Activated CD4-positive, alpha-beta memory T cell treated with anti-CD3 and anti-CD28 coated beads for 36 hours (primary cell): ENCODE measurements at regions of chr2 and their contacts with region 1.

Region 1: GRCh38 chr2:27890146-27890923 is at the starts of genes BABAM2 and RBKS:
- DNase-seq: peak; percentile 93
- H3K4me3 Mint-ChIP-seq: peak within 1 kb of the TSS; percentile 98
- H3K27ac Mint-ChIP-seq: peak within 1 kb of the TSS; percentile 100
- H3K4me1 Mint-ChIP-seq: peaks cover 63% of the 10 kb centered on the region
- H3K27me3 Mint-ChIP-seq: peaks cover 3% of the 10 kb centered on the region
- total RNA-seq, gene BABAM2: 72.3 to 76.6 TPM
- total RNA-seq, gene RBKS: 9.2 to 9.7 TPM

Region 2: DNA sequence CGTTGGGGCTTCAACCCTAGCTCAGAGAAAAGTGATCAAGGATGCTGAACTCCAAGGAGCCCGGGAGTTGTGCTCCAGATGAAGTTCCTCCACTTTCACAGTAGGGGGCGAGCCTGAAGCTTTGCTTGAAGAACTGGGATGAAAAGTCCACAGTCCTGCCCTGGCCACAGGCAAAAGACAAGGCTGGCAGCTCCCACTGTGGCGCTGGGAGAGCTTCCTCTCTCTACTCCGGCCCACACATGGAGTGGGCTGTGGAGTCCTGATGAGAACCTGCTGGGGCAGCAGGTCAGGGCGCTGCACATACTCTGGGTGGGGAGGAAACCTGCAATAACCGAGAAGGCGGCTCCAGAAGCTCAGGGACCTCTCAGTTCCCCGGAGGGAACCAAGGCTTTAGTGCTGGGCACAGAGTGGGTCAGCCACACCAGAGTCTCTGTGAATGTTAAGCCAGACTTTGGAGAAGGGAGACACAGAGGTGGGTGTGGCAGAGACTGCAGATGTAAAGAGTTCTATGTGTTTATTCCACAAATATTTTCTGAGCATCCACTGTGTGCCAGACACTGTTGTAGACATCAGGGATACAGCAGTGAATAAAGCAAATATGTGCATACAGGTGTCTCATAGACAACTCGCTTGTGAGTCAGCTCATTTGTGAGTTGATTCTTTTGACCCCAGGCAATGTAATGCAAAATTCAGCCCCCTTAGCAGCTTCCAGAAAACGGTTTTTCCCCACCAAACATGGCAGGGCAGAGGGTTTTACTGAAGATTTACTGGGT is 166.8 kb before region 1 on chr2:
- CTCF ChIA-PET with region 1: no interaction called
- POLR2A ChIA-PET with region 1: no interaction called
- intact Hi-C with region 1: loop called (anchors 2 kb)
- DNase-seq: peak; percentile 44
- H3K4me3 Mint-ChIP-seq: no peak overlapping the region
- H3K27ac Mint-ChIP-seq: no peak overlapping the region
- H3K4me1 Mint-ChIP-seq: peaks cover 29% of the 10 kb centered on the region
- H3K27me3 Mint-ChIP-seq: peaks cover 2% of the 10 kb centered on the region

Region 3: GRCh38 chr2:27779417-27780055 is 110.8 kb before region 1 on chr2:
- CTCF ChIA-PET with region 1: no interaction called
- POLR2A ChIA-PET with region 1: no interaction called
- intact Hi-C with region 1: no loop called
- DNase-seq: no peak
- H3K4me3 Mint-ChIP-seq: no peak overlapping the region
- H3K27ac Mint-ChIP-seq: no peak overlapping the region
- H3K4me1 Mint-ChIP-seq: peaks cover 25% of the 10 kb centered on the region
- H3K27me3 Mint-ChIP-seq: no peaks in the 10 kb centered on the region

Region 4: GRCh38 chr2:27860111-27860510 is 30.2 kb before region 1 on chr2:
- CTCF ChIA-PET with region 1: no interaction called
- POLR2A ChIA-PET with region 1: interaction called, 5 read pairs
- intact Hi-C with region 1: loop called (anchors 1 kb)
- DNase-seq: no peak
- H3K4me3 Mint-ChIP-seq: no peak overlapping the region
- H3K27ac Mint-ChIP-seq: peak overlapping the region; percentile 67
- H3K4me1 Mint-ChIP-seq: peaks cover 52% of the 10 kb centered on the region
- H3K27me3 Mint-ChIP-seq: no peaks in the 10 kb centered on the region

Region 5: GRCh38 chr2:27954771-27955383 is 64.5 kb after region 1 on chr2:
- CTCF ChIA-PET with region 1: no interaction called
- POLR2A ChIA-PET with region 1: interaction called, 3 read pairs
- intact Hi-C with region 1: loop called (anchors 2 kb)
- DNase-seq: peak; percentile 77
- H3K4me3 Mint-ChIP-seq: peak overlapping the region; percentile 42
- H3K27ac Mint-ChIP-seq: peak overlapping the region; percentile 86
- H3K4me1 Mint-ChIP-seq: peaks cover 84% of the 10 kb centered on the region
- H3K27me3 Mint-ChIP-seq: no peaks in the 10 kb centered on the region

Region 6: DNA sequence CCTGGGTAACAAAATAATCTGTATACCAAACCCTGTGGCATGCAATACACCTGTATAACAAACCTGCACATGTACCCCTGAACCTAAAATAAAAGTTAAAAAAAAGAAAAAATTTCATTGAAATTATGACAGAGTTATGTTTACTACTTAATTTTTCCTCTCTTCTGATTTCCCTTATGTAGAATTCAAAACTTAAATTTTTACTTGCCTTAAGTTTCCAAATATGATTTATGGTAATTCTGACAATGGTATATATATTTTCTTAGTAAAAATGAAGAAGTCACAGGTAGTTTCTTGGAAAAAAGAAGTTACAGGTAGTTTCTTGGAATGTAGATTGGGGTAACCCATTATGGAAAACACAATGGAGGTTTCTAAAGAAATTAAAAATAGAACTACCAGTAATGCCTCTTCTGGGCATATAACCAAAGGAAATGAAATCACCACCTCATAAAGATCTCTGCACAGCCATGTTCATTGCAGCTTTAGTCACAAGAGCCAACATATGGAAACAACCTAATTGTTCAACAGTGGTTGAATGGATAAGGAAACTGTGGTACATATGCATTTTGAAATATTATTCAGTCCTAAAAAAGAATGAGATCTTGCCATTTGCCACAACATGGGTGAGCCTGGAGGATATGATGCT is 165.1 kb after region 1 on chr2:
- CTCF ChIA-PET with region 1: no interaction called
- POLR2A ChIA-PET with region 1: no interaction called
- intact Hi-C with region 1: loop called (anchors 5 kb)
- DNase-seq: no peak
- H3K4me3 Mint-ChIP-seq: no peak overlapping the region
- H3K27ac Mint-ChIP-seq: peak overlapping the region; percentile 82
- H3K4me1 Mint-ChIP-seq: peaks cover 27% of the 10 kb centered on the region
- H3K27me3 Mint-ChIP-seq: no peaks in the 10 kb centered on the region

Region 7: DNA sequence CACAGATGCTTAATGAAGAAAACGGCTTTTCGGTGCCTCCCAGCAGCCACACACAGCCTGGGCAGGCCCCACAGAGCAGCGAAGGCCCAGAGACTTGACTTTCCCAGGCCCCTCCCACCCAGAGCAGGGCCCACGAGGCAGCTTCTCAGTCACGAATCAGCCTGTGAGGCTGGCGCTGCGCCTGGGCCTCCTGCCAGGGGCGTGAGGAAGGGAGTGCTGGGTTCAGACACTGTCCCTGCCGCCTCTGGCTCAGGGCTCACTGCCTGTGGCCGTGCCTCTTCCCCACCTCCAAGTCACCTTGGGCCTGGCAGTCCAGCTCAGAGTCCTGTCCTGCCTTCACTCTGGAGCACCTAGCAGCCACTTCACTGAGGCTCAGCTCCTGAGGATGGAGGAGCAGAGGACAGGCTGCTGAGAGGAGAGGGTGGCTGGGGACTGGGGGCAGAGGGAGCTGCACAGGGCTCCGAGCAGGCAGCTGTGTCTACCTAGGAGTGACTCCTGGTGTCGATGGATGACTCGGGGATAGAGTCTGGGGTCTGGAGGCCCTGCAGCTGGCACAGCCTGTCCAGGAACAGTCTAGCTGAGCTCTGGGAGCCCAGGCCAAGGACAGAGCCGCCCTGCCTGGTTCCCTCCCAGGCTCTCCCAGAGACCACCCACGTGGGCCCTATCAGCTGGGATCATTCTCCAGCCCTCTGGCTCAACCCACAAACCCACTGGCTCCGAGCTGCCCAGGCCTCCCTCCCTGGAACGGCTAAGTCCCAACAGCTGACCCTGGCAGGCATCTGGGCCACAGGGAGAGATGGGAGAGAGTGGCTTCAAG is 466.0 kb after region 1 on chr2:
- CTCF ChIA-PET with region 1: no interaction called
- POLR2A ChIA-PET with region 1: no interaction called
- intact Hi-C with region 1: loop called (anchors 5 kb)
- DNase-seq: peak; percentile 50
- H3K4me3 Mint-ChIP-seq: no peak overlapping the region
- H3K27ac Mint-ChIP-seq: peak overlapping the region; percentile 46
- H3K4me1 Mint-ChIP-seq: peaks cover 45% of the 10 kb centered on the region
- H3K27me3 Mint-ChIP-seq: no peaks in the 10 kb centered on the region

Region 8: DNA sequence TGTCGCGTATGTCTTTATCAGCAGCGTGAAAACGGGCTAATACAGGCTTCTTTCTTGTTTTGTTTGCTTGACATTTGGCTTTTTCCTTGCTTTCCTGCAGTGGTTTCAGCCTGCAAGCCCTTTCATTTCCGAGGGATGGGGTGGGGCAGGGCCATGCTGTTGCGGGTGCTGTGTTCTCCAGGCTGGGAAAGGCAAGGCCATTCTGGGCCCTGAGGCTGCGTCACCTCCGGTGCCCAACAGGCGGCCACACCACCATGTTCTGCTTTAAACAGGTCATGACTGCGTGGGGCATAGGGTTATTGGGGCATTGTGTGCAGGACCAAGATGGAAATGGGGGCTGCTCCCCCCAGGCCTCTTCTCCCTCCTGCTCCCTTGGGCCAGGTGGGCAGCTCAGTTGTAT is 566.9 kb after region 1 on chr2:
- CTCF ChIA-PET with region 1: no interaction called
- POLR2A ChIA-PET with region 1: no interaction called
- intact Hi-C with region 1: no loop called
- DNase-seq: no peak
- H3K4me3 Mint-ChIP-seq: no peak overlapping the region
- H3K27ac Mint-ChIP-seq: no peak overlapping the region
- H3K4me1 Mint-ChIP-seq: peaks cover 5% of the 10 kb centered on the region
- H3K27me3 Mint-ChIP-seq: peaks cover 3% of the 10 kb centered on the region